ENCODE measurements at regions of chr4 and their contacts with region 1.

Region 1: DNA sequence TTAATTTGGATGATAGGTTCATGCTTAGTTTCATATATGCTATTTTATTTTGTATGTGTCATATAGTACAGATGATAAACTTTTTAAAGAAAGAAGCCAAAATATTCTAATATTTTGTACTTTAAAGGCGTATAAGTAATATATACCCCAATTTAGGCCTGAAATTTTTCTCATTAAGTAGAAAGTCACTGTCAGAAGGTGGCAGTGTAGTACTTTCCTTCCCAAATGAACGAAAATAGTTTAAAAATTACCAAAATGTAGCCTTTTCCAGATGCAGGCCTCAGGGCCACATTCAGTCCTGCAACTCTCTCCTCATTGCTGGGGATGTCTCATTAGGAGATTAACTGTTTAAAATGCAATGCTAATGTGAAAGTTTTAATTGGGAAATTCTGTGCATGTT is 1263.6 kb downstream of the C4orf33 start:
- DNase-seq: peak; percentile 56
- H3K4me3 ChIP-seq: no peak overlapping the region
- H3K27ac ChIP-seq: no peak overlapping the region
- H3K4me1 ChIP-seq: peaks cover 51% of the 10 kb centered on the region
- CTCF ChIP-seq: peak; percentile 84

Region 2: GRCh38 chr4:130154901-130155300 is 204.6 kb before region 1 on chr4:
- CTCF ChIA-PET with region 1: no interaction called
- POLR2A ChIA-PET with region 1: no interaction called
- intact Hi-C with region 1: no loop called
- DNase-seq: no peak
- H3K4me3 ChIP-seq: no peak overlapping the region
- H3K27ac ChIP-seq: no peak overlapping the region
- H3K4me1 ChIP-seq: no peaks in the 10 kb centered on the region
- CTCF ChIP-seq: no peak

Region 3: GRCh38 chr4:130808492-130808891 is 448.9 kb after region 1 on chr4:
- CTCF ChIA-PET with region 1: no interaction called
- POLR2A ChIA-PET with region 1: no interaction called
- intact Hi-C with region 1: loop called (anchors 1 kb)
- DNase-seq: peak; percentile 7
- H3K4me3 ChIP-seq: no peak overlapping the region
- H3K27ac ChIP-seq: no peak overlapping the region
- H3K4me1 ChIP-seq: no peaks in the 10 kb centered on the region
- CTCF ChIP-seq: peak; percentile 72